Activated T-helper 1 cell treated with anti-CD3 and anti-CD28 coated beads, Interleukin-12 subunit alpha, Interleukin-12 subunit beta, Interleukin-2, Interleukin-4 antibody, amounts not matched to agents 30 ng/mL and 10 ng/mL and 1 ng/mL, durations not matched to agents 14 hours and 24 hours and 36 hours (primary cell): ENCODE measurements at regions of chr15 and their contacts with region 1.

Region 1: GRCh38 chr15:72272213-72273002 is at the start of gene PARP6:
- DNase-seq: peak; percentile 99
- H3K4me3 Mint-ChIP-seq: peak within 1 kb of the TSS; percentile 95
- H3K27ac Mint-ChIP-seq: peak within 1 kb of the TSS; percentile 90
- H3K4me1 Mint-ChIP-seq: peaks cover 43% of the 10 kb centered on the region
- H3K27me3 Mint-ChIP-seq: peaks cover 3% of the 10 kb centered on the region
- total RNA-seq, gene PARP6: 79.3 and 87.1 TPM in 2 replicates

Region 2: DNA sequence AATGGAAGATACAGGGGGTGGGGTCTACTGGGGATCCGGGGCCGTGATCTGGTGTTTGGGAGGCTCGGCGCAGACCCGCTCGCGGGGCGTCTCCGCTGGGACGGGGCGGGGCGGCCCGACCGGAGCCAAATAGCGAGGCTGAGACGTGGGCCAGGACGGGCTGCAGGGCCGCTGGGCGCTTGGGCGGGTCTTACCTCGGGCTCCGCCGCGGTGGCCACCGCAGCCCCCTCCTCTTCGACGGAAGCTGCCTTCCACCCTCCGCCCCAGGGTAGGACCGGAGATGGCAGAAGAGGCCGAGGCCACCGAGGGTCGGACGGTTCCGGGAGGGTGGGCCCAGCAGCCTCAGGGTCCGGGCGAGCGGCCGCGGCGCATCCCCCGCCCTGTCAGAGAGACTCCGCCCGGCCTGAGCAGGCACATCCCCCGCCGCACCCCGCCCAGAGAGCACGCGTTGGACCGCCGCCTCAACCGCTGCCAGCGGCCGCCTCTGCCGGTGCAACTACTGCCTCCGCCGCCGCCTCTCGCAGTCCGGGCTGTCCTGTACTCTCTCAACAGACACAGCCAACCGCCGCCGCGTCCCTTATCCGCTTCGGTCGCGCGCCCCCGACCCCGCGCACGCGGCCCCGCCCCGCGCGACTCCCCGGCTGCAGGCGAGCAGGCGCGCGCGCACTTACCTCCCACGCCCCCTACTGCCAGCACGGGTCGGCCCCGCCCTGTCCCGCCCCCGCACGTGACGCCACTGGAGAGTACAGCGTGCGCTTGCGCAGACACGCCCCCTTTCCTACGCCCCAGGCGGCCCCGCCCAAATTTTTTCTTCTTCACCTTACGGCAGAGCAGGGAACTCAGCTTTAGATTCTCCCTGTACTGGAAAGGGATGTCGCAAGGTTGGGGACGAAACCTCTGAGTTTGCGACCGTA is 154.7 kb before region 1 on chr15 and contains the start of gene MYO9A:
- intact Hi-C with region 1: loop called (anchors 1 kb)
- DNase-seq: peak; percentile 95
- H3K4me3 Mint-ChIP-seq: peak within 1 kb of the TSS; percentile 93
- H3K27ac Mint-ChIP-seq: peak within 1 kb of the TSS; percentile 95
- H3K4me1 Mint-ChIP-seq: peaks cover 23% of the 10 kb centered on the region
- H3K27me3 Mint-ChIP-seq: peaks cover 16% of the 10 kb centered on the region
- total RNA-seq, gene MYO9A: 15.2 and 16.4 TPM in 2 replicates

Region 3: GRCh38 chr15:72199711-72200212 is 72.6 kb before region 1 on chr15:
- intact Hi-C with region 1: loop called (anchors 2 kb)
- DNase-seq: peak; percentile 60
- H3K4me3 Mint-ChIP-seq: peak overlapping the region; percentile 5
- H3K27ac Mint-ChIP-seq: no peak overlapping the region
- H3K4me1 Mint-ChIP-seq: peaks cover 39% of the 10 kb centered on the region
- H3K27me3 Mint-ChIP-seq: peaks cover 3% of the 10 kb centered on the region

Region 4: GRCh38 chr15:72237286-72238224 is 34.9 kb before region 1 on chr15:
- intact Hi-C with region 1: loop called (anchors 1 kb)
- DNase-seq: peak; percentile 79
- H3K4me3 Mint-ChIP-seq: peak overlapping the region; percentile 82
- H3K27ac Mint-ChIP-seq: peak overlapping the region; percentile 90
- H3K4me1 Mint-ChIP-seq: peaks cover 54% of the 10 kb centered on the region
- H3K27me3 Mint-ChIP-seq: no peaks in the 10 kb centered on the region

Region 5: GRCh38 chr15:72319985-72320671 is 47.7 kb after region 1 on chr15 and contains the start of gene CELF6:
- intact Hi-C with region 1: loop called (anchors 2 kb)
- DNase-seq: peak; percentile 73
- H3K4me3 Mint-ChIP-seq: peak within 1 kb of the TSS; percentile 84
- H3K27ac Mint-ChIP-seq: peak within 1 kb of the TSS; percentile 60
- H3K4me1 Mint-ChIP-seq: peaks cover 19% of the 10 kb centered on the region
- H3K27me3 Mint-ChIP-seq: peaks cover 21% of the 10 kb centered on the region
- total RNA-seq, gene CELF6: 0.26 and 0.27 TPM in 2 replicates

Region 6: GRCh38 chr15:72389231-72389630 is 116.8 kb after region 1 on chr15:
- intact Hi-C with region 1: no loop called
- DNase-seq: no peak
- H3K4me3 Mint-ChIP-seq: no peak overlapping the region
- H3K27ac Mint-ChIP-seq: no peak overlapping the region
- H3K4me1 Mint-ChIP-seq: no peaks in the 10 kb centered on the region
- H3K27me3 Mint-ChIP-seq: peaks cover 12% of the 10 kb centered on the region